PC-3 (cell line): ENCODE measurements at regions of chr5 and their contacts with region 1.

Region 1: DNA sequence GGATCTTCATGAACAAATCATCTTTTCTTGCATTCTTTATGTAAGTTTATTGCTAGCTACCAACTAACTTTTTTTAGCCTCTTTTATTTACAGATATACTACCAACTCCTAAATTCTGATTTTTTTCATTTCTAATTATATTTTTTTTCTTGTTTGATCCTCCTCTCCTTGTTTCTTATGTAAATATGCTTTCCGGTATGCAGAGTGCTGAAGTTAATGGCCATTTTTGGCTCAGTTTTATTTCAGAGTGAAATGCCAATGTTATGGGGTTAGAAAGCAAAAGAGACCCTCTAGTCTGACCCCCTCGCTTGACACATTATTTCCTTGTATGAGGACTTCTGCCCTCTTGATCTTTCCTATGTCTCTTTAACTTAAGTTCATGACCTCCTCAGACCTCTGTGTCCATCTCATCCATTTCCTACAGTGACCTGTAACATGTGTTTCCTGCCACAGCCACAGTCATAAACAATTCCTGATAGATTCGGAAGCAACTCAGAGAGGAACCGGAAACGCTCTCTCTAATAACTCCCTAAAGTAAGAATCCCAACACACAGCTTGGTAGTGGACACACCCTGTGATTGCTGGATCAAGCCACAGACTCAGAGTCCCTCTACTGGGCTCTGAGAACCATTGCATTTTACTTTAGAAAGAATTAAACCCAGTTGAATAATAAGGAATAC is 42.9 kb upstream of the AFAP1L1 start:
- DNase-seq: peak; percentile 98
- ATAC-seq: peak; percentile 91
- H3K4me3 ChIP-seq: no peak overlapping the region
- H3K27ac ChIP-seq: peak overlapping the region; percentile 17
- H3K4me1 ChIP-seq: peaks cover 34% of the 10 kb centered on the region
- H3K27me3 ChIP-seq: no peaks in the 10 kb centered on the region
- CTCF ChIP-seq: peak; percentile 100

Region 2: DNA sequence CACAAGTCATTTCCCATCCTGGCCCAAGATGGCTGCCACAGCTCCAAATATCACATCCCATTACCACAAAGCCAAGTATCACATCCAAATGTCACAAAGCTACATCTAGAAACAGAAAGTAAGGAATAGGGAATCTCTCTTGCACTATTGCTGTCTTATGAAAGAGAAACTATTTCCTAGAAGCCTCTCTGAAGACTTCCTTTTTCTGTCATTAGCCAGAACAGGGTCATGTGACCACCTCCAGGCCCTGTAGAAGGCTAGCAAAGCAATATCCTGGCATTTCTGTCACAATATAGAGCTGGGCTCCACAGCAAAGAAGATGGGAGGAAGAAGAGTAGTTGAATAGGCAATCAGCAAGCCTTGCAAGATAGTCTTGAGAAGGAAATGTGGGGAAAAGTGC is 265.1 kb before region 1 on chr5:
- CTCF ChIA-PET with region 1: no interaction called
- POLR2A ChIA-PET with region 1: no interaction called
- intact Hi-C with region 1: loop called (anchors 5 kb)
- DNase-seq: no peak
- ATAC-seq: no peak
- H3K4me3 ChIP-seq: no peak overlapping the region
- H3K27ac ChIP-seq: peak overlapping the region; percentile 79; the same call in 1 of the 2 replicates
- H3K4me1 ChIP-seq: peaks cover 81% of the 10 kb centered on the region
- H3K27me3 ChIP-seq: no peaks in the 10 kb centered on the region
- CTCF ChIP-seq: no peak

Region 3: GRCh38 chr5:149128023-149128875 is 100.5 kb before region 1 on chr5:
- CTCF ChIA-PET with region 1: interaction called, 39 read pairs
- POLR2A ChIA-PET with region 1: no interaction called
- intact Hi-C with region 1: loop called (anchors 1 kb)
- DNase-seq: peak; percentile 87
- ATAC-seq: peak; percentile 48
- H3K4me3 ChIP-seq: no peak overlapping the region
- H3K27ac ChIP-seq: peak overlapping the region; percentile 19
- H3K4me1 ChIP-seq: peaks cover 71% of the 10 kb centered on the region
- H3K27me3 ChIP-seq: no peaks in the 10 kb centered on the region
- CTCF ChIP-seq: peak; percentile 100

Region 4: GRCh38 chr5:149141224-149141956 is 87.4 kb before region 1 on chr5 and contains the start of gene ABLIM3:
- CTCF ChIA-PET with region 1: interaction called, 36 read pairs
- POLR2A ChIA-PET with region 1: interaction called, 4 read pairs
- intact Hi-C with region 1: loop called (anchors 1 kb)
- DNase-seq: peak; percentile 96
- ATAC-seq: peak; percentile 70
- H3K4me3 ChIP-seq: peak within 1 kb of the TSS; percentile 79
- H3K27ac ChIP-seq: peak within 1 kb of the TSS; percentile 75
- H3K4me1 ChIP-seq: peaks cover 49% of the 10 kb centered on the region
- H3K27me3 ChIP-seq: no peaks in the 10 kb centered on the region
- CTCF ChIP-seq: peak; percentile 100
- total RNA-seq, gene ABLIM3: 43.6 and 48.0 TPM in 2 replicates

Region 5: GRCh38 chr5:149174847-149175234 is 53.9 kb before region 1 on chr5:
- CTCF ChIA-PET with region 1: no interaction called
- POLR2A ChIA-PET with region 1: no interaction called
- intact Hi-C with region 1: loop called (anchors 1 kb)
- DNase-seq: peak; percentile 68
- ATAC-seq: peak; percentile 28
- H3K4me3 ChIP-seq: peak overlapping the region; percentile 6; the same call in 1 of the 2 replicates
- H3K27ac ChIP-seq: peak overlapping the region; percentile 86
- H3K4me1 ChIP-seq: peaks cover 47% of the 10 kb centered on the region
- H3K27me3 ChIP-seq: no peaks in the 10 kb centered on the region
- CTCF ChIP-seq: no peak

Region 6: DNA sequence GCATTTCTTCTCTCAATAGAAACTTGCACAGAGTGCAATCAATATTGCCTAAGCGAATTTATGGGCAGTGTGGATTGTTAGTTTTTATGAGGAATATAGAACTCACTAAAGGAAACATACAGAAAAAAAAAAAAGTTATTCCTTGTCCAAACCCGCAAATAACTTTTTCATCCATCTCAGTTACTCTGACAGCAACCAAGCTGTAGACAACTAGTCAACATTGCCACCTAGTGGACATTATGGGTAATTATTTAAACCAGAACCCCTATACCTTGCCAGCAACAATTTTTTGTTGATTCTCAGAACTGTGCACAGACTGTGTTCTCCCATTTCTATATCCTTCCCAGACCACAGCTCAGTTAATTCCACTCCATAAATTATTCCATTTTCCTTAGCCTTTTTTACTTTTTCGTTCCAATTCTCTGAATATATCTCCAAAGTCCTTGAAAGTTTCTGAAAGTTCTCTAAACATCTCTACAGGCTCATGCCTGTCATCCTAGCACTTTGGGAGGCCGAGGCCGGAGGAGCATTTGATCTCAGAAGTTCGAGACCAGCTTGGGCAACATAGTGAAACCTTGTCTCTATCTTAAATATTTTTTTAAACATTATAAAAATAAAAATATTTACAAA is 40.3 kb after region 1 on chr5:
- CTCF ChIA-PET with region 1: interaction called, 4 read pairs
- POLR2A ChIA-PET with region 1: no interaction called
- intact Hi-C with region 1: loop called (anchors 2 kb)
- DNase-seq: peak; percentile 96
- ATAC-seq: 0 out of 2 replicates have a peak, but pooled peaks have one; percentile 3
- H3K4me3 ChIP-seq: no peak overlapping the region
- H3K27ac ChIP-seq: no peak overlapping the region
- H3K4me1 ChIP-seq: peaks cover 28% of the 10 kb centered on the region
- H3K27me3 ChIP-seq: no peaks in the 10 kb centered on the region
- CTCF ChIP-seq: peak; percentile 99